ENCODE measurements at regions of chr5 and their contacts with region 1.

Region 1: DNA sequence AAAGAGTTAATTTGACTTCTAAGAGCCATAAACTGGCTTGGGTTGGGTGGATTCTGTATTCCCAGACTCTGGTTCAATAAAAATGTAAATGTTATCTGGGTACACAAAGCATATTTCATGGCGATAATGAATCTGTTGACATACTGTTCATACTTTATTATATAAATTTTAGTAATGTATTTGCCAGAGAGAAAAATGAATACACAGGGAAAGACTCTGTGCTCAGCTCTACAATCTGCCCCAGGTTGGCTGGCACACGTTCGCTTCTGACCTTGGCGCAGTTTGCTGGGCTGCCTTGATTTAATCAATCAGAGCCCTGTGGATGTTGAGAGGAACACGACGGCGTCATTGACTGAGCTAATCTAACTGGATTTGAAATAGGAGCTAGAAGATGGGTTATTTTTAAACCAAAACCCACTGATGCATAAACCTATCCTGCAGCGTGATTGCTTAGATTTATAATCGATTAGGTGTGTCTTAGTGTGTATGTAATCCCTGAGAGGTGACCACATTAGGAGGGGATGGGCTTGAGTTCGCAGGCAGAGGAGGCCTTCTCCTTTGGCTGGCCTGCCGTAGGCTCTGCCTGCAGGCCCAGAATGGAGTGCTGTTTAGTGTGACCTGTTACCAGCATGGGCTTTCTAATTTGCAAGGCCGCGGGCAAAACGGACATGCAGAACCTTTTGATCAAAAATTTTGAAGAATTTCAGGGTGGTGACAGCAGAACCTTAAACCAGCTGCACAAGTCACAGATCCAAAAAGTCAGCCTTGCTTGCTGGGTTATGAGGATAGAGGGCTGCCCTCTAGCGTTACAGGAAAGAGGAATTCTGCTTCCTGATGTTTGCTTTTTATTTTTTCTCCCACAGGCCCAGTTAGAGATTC is 3.9 kb upstream of the ADCY2 start:
- DNase-seq: no peak
- H3K4me3 ChIP-seq: no peak overlapping the region
- H3K27ac ChIP-seq: no peak overlapping the region
- H3K4me1 ChIP-seq: peaks cover 0 to 16% (median 7%) of the 10 kb centered on the region in 4 donors
- H3K27me3 ChIP-seq: no peaks in the 10 kb centered on the region
- CTCF ChIP-seq: peak; percentile 34 to 51 (median 50)
- EP300 ChIP-seq: no peak
- POLR2A ChIP-seq: no peak

Region 2: GRCh38 chr5:6765612-6766525 is 626.2 kb before region 1 on chr5:
- intact Hi-C with region 1: loop called (anchors 5 kb)
- DNase-seq: peak; percentile 77
- H3K4me3 ChIP-seq: no peak overlapping the region
- H3K27ac ChIP-seq: peak overlapping the region; percentile 36 to 62 (median 58)
- H3K4me1 ChIP-seq: peaks cover 0 to 16% (median 14%) of the 10 kb centered on the region in 4 donors
- H3K27me3 ChIP-seq: no peaks in the 10 kb centered on the region
- CTCF ChIP-seq: peak in 3 of 4 experiments; percentile 44 to 77 (median 58)
- EP300 ChIP-seq: no peak
- POLR2A ChIP-seq: no peak

Region 3: DNA sequence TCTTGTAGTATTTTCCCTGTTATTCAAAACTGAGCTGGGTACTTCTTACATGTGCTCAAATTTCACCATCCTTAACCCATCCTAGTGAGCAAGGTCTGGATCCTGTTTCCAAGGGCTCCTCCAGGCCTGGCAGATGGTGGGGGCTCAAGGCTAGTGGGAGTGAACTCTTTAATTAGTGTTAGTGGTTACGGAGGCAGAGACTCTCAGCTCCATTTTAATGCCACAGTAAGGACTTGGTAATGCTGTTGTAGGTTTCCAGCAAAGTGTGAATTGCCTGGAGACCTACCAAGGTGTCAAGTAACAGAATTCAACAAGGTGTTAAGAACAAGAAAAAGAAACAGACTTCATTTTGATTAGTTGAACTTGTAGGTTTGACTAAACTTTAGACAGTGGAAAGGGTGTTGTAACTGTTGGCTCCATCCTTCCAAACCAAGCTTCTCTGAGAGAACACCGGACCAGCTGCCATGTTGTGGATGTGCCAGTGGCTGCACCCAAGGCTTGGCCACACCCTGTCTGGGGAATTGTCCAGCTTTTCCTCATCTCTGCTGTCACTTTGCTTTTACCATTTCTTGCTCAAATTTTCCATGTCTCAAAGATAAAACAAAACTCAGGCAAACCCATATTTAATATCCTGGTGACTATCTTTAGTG is 102.6 kb after region 1 on chr5:
- intact Hi-C with region 1: no loop called
- DNase-seq: no peak
- H3K4me3 ChIP-seq: no peak overlapping the region
- H3K27ac ChIP-seq: no peak overlapping the region
- H3K4me1 ChIP-seq: peaks cover 0 to 4% (median 0%) of the 10 kb centered on the region in 4 donors
- H3K27me3 ChIP-seq: no peaks in the 10 kb centered on the region
- CTCF ChIP-seq: no peak
- EP300 ChIP-seq: no peak
- POLR2A ChIP-seq: no peak

Region 4: DNA sequence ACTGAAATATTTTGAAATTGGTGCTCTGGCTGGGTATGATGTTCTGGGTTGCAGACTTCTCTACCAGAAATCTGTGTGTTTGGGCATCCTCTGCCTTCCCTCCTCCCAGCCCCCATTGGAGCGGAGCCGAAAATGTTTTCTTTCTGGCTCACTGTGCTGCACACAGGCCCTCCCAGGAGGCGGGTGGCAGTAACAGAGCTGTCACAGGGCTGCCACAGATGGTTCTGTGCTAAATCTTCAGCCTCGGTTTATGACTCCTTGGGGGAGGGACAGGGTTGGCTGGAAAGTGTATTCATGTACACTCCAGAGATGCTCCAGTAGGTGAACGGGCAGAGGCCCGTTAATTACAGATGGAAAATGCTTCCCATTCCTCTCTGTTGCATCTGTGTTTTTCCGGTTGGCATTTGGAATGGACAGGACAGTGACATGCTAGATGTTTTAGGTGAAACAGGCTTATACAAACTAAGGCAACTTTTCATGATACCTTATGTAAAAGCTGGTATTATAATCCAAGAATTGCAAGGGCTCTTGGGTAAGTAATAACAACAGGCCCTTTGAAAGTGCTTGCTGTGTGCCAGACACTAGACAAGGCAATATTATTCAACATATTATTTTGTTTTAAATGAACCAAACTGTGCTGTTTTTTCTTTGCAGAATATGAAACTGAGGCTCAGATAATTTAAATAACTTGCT is 184.1 kb after region 1 on chr5:
- intact Hi-C with region 1: loop called (anchors 5 kb)
- DNase-seq: peak; percentile 82
- H3K4me3 ChIP-seq: no peak overlapping the region
- H3K27ac ChIP-seq: peak overlapping the region in 3 of 4 donors; percentile 56 to 66 (median 64)
- H3K4me1 ChIP-seq: peaks cover 0 to 28% (median 23%) of the 10 kb centered on the region in 4 donors
- H3K27me3 ChIP-seq: no peaks in the 10 kb centered on the region
- CTCF ChIP-seq: no peak
- EP300 ChIP-seq: peak in 3 of 4 donors; percentile 3 to 75 (median 4)
- POLR2A ChIP-seq: no peak

Region 5: DNA sequence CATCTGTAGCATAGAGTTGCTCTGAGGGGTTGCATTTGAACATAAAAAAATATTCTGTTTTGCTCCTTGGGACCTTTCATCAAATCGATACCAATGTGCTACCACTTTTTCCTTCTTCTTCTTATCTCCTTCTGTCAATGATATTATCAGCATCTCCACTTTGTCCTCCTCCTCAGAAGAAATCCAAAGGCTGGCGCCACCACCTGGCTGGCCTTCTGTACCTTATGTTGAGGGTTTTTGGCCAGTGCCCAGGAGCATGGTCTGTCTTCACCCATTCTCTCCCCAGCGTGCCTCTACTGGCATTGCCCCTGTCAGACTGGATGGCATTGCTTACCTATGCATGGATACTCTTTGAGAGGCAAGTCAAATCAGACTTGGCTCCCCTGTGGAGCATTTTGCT is 291.7 kb after region 1 on chr5:
- intact Hi-C with region 1: loop called (anchors 2 kb)
- DNase-seq: no peak
- H3K4me3 ChIP-seq: no peak overlapping the region
- H3K27ac ChIP-seq: no peak overlapping the region
- H3K4me1 ChIP-seq: peaks cover 0 to 35% (median 4%) of the 10 kb centered on the region in 4 donors
- H3K27me3 ChIP-seq: no peaks in the 10 kb centered on the region
- CTCF ChIP-seq: no peak
- EP300 ChIP-seq: no peak
- POLR2A ChIP-seq: no peak

Region 6: DNA sequence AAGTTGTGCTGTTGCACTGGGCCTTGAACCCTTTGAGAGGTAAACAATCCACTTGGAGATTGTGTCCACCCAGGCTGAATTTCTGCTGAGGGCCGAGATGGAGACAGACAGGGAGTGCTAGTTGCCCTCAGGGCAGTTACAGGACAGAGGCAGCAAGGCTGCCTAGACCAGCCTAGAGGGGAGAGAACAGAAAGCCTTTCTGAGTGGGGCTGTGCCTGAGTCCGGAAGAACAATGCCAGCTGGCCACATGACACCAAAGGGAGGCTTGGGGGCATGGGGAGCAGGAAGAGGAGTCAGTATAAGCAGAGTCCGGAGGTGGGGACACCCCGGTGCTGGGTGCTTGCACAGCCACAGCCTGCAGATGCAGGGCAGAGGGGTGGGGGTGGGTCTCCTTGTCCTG is 313.2 kb after region 1 on chr5:
- intact Hi-C with region 1: no loop called
- DNase-seq: no peak
- H3K4me3 ChIP-seq: no peak overlapping the region
- H3K27ac ChIP-seq: no peak overlapping the region
- H3K4me1 ChIP-seq: no peaks in the 10 kb centered on the region
- H3K27me3 ChIP-seq: no peaks in the 10 kb centered on the region
- CTCF ChIP-seq: no peak
- EP300 ChIP-seq: no peak
- POLR2A ChIP-seq: no peak

Region 7: GRCh38 chr5:7815892-7816534 is 424.0 kb after region 1 on chr5:
- intact Hi-C with region 1: loop called (anchors 2 kb)
- DNase-seq: peak; percentile 88
- H3K4me3 ChIP-seq: no peak overlapping the region
- H3K27ac ChIP-seq: no peak overlapping the region
- H3K4me1 ChIP-seq: peaks cover 0 to 10% (median 7%) of the 10 kb centered on the region in 4 donors
- H3K27me3 ChIP-seq: no peaks in the 10 kb centered on the region
- CTCF ChIP-seq: peak; percentile 17 to 77 (median 65)
- EP300 ChIP-seq: no peak
- POLR2A ChIP-seq: no peak